ENCODE measurements at regions of chr14 and their contacts with region 1.

Region 1: GRCh38 chr14:91244501-91244901 is at the start of gene GPR68:
- DNase-seq: peak in 4 of 5 donors; percentile 40 to 69 (median 43)
- H3K4me3 ChIP-seq: peak within 1 kb of the TSS; percentile 66 to 96
- H3K4me3 Mint-ChIP-seq: peak within 1 kb of the TSS; percentile 91 to 99 (median 94)
- H3K27ac ChIP-seq: peak within 1 kb of the TSS; percentile 99
- H3K27ac Mint-ChIP-seq: peak within 1 kb of the TSS; percentile 92 to 100 (median 99)
- H3K4me1 ChIP-seq: peaks cover 94% of the 10 kb centered on the region
- H3K4me1 Mint-ChIP-seq: peaks cover 64 to 98% (median 82%) of the 10 kb centered on the region in 4 donors
- H3K27me3 ChIP-seq: no peaks in the 10 kb centered on the region
- H3K27me3 Mint-ChIP-seq: no peaks in the 10 kb centered on the region
- total RNA-seq, gene GPR68: 10.6 to 10.8 TPM

Region 2: GRCh38 chr14:90569606-90570387 is 674.7 kb before region 1 on chr14:
- CTCF ChIA-PET with region 1: no interaction called
- POLR2A ChIA-PET with region 1: no interaction called
- intact Hi-C with region 1: no loop called
- DNase-seq: no peak
- H3K4me3 ChIP-seq: no peak overlapping the region
- H3K4me3 Mint-ChIP-seq: no peak overlapping the region
- H3K27ac ChIP-seq: no peak overlapping the region
- H3K27ac Mint-ChIP-seq: no peak overlapping the region
- H3K4me1 ChIP-seq: no peaks in the 10 kb centered on the region
- H3K4me1 Mint-ChIP-seq: no peaks in the 10 kb centered on the region
- H3K27me3 ChIP-seq: no peaks in the 10 kb centered on the region
- H3K27me3 Mint-ChIP-seq: no peaks in the 10 kb centered on the region

Region 3: GRCh38 chr14:90911121-90911520 is 333.4 kb before region 1 on chr14:
- CTCF ChIA-PET with region 1: no interaction called
- POLR2A ChIA-PET with region 1: no interaction called
- intact Hi-C with region 1: no loop called
- DNase-seq: no peak
- H3K4me3 ChIP-seq: no peak overlapping the region
- H3K4me3 Mint-ChIP-seq: no peak overlapping the region
- H3K27ac ChIP-seq: no peak overlapping the region
- H3K27ac Mint-ChIP-seq: peak overlapping the region in 3 of 7 donors; percentile 1 to 36 (median 19)
- H3K4me1 ChIP-seq: no peaks in the 10 kb centered on the region
- H3K4me1 Mint-ChIP-seq: peaks cover 0 to 11% (median 9%) of the 10 kb centered on the region in 4 donors
- H3K27me3 ChIP-seq: no peaks in the 10 kb centered on the region
- H3K27me3 Mint-ChIP-seq: no peaks in the 10 kb centered on the region

Region 4: DNA sequence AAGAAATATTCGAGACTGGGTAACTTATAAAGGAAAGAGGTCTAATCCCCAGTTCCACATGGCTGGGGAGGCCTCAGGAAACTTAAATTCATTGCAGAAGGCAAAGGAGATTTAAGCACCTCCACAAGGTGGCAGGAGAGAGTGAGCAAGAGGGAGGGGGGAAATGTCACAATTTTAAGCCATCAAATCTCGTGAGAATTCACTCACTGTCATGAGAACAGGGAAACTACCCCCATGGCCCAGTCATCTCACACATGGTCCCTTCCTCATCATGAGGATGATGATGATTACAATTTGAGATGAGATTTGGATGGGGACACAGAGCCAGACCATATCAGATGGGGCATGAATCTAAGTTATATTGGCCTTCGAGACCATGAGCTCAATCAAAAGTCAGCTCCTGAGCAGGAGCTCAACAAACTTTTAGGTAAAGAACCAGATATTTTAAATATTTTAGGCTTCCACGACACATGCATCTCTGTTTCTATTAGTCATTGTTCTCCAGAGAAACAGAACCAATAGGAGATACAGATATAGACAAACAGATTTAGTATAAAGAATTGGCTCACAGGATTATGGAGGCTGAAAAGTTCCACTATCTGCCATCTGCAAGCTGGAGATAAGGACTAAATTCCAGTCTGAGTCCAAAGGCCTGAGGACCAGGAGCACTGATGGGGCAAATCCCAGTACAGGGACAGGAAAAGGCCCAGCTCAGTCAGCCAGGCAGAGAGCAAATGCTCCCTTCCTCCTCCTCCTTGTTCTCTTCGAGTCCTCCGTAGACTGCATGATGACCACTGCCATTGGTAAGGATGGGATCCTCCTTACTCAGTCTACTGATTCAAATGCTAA is 105.8 kb before region 1 on chr14:
- CTCF ChIA-PET with region 1: no interaction called
- POLR2A ChIA-PET with region 1: no interaction called
- intact Hi-C with region 1: no loop called
- DNase-seq: peak; percentile 40 to 53 (median 48)
- H3K4me3 ChIP-seq: no peak overlapping the region
- H3K4me3 Mint-ChIP-seq: no peak overlapping the region
- H3K27ac ChIP-seq: no peak overlapping the region
- H3K27ac Mint-ChIP-seq: peak overlapping the region in 4 of 7 donors; percentile 13 to 64 (median 60)
- H3K4me1 ChIP-seq: peaks cover 20% of the 10 kb centered on the region
- H3K4me1 Mint-ChIP-seq: peaks cover 23 to 45% (median 37%) of the 10 kb centered on the region in 4 donors
- H3K27me3 ChIP-seq: no peaks in the 10 kb centered on the region
- H3K27me3 Mint-ChIP-seq: no peaks in the 10 kb centered on the region

Region 5: DNA sequence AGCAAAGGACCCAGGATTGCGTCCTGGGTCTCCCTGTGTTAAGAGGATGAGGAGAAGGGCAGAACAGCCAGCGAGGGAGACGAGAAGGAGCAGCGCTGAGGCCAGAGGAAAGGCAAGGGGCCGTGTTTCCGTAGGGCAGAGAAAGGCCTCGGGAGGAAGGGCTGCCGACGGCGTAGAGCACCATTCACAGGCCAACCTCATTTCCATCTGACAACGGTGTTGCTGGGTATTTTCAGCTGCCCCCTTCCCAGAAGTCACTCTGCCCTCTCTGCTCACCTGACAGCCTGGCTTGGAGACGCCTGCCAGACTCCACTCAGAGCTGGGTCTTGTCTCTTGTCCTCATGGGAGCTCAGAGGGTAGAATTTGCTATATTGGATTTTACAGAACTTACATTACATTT is 51.4 kb before region 1 on chr14:
- CTCF ChIA-PET with region 1: interaction called, 3 read pairs
- POLR2A ChIA-PET with region 1: interaction called, 34 read pairs
- intact Hi-C with region 1: loop called (anchors 5 kb)
- DNase-seq: no peak
- H3K4me3 ChIP-seq: no peak overlapping the region
- H3K4me3 Mint-ChIP-seq: peak overlapping the region in 1 of 8 donors; percentile 55
- H3K27ac ChIP-seq: no peak overlapping the region
- H3K27ac Mint-ChIP-seq: peak overlapping the region in 4 of 7 donors; percentile 3 to 44 (median 40)
- H3K4me1 ChIP-seq: peaks cover 14% of the 10 kb centered on the region
- H3K4me1 Mint-ChIP-seq: peaks cover 18 to 31% (median 25%) of the 10 kb centered on the region in 4 donors
- H3K27me3 ChIP-seq: no peaks in the 10 kb centered on the region
- H3K27me3 Mint-ChIP-seq: no peaks in the 10 kb centered on the region

Region 6: DNA sequence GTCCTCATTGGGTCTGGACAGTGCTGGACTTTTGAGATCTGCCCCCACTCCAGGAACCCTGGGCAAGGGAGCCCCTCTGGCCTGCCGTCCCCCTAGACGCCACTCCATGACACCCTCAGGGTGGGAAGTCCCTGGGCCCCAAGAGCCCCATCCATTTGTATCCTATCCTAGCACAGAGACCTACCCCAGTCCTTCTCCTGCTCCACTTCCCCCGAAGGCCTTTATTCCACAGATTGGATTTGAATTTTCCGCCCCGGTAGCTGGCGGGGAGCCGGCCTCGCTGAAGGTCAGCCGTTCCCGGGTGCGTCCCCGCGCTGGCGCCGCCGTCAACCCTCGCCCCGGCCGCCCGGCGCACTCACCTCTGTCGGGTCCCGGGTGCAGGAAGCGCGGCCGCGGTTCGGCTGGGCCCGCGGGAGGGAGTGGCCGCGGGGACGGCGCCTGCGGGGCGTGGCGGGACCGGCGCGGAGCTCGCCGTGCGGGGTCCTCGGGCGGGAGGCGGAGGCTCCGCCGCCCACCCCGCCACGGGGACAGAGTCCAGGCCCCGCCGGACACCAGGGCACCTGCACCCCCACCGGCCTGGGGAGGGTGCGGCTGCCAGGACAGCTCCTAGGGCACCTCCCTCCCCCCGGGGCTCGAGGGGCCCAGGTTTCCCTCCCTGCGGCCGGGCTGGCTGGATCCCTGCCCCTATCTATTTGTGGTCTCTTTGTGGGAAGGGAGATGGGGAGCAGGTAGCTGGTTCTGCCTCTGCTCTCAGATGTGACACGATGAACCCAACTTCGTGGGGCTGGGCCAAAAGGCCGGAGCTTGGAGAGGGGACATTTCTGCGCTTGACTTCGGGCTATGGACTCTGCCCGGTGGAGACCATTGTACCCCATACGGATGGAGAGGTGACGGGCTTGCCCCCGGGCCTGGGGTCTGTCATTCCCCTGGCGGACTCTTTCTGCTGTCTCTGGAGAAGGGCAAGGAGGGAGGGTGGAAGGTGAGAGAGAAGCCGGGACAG is 19.9 kb after region 1 on chr14:
- CTCF ChIA-PET with region 1: interaction called, 7 read pairs
- POLR2A ChIA-PET with region 1: interaction called, 124 read pairs
- intact Hi-C with region 1: no loop called
- DNase-seq: peak in 2 of 5 donors; percentile 39 to 41
- H3K4me3 ChIP-seq: peak overlapping the region in 1 of 2 donors; percentile 32
- H3K4me3 Mint-ChIP-seq: peak overlapping the region; percentile 69 to 85 (median 79)
- H3K27ac ChIP-seq: peak overlapping the region; percentile 31
- H3K27ac Mint-ChIP-seq: peak overlapping the region in 6 of 7 donors; percentile 60 to 97 (median 84)
- H3K4me1 ChIP-seq: peaks cover 45% of the 10 kb centered on the region
- H3K4me1 Mint-ChIP-seq: peaks cover 39 to 69% (median 46%) of the 10 kb centered on the region in 4 donors
- H3K27me3 ChIP-seq: no peaks in the 10 kb centered on the region
- H3K27me3 Mint-ChIP-seq: no peaks in the 10 kb centered on the region

Region 7: DNA sequence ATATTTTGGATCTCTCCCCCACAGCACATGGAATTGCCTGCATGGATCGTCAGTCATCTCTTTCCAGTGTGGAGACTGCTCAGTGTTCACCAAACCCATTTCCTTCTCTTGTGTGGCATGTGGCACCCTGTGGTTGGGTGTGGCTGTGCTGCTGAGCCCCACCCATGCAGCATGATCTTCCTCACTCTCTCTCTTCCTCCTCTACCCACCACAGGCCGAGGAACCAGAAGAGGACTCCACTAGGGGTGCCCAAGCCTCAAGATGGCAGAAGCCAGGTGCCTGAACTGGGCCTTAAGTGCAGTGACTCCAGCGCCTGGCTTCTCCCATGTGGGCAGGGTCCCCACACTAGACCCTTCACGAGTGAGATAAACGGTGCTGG is 66.8 kb after region 1 on chr14:
- CTCF ChIA-PET with region 1: interaction called, 3 read pairs
- POLR2A ChIA-PET with region 1: interaction called, 21 read pairs
- intact Hi-C with region 1: no loop called
- DNase-seq: peak; percentile 71 to 79 (median 77)
- H3K4me3 ChIP-seq: no peak overlapping the region
- H3K4me3 Mint-ChIP-seq: peak overlapping the region in 7 of 8 donors; percentile 61 to 87 (median 79)
- H3K27ac ChIP-seq: peak overlapping the region; percentile 64
- H3K27ac Mint-ChIP-seq: peak overlapping the region; percentile 91 to 99 (median 99)
- H3K4me1 ChIP-seq: peaks cover 64% of the 10 kb centered on the region
- H3K4me1 Mint-ChIP-seq: peaks cover 40 to 82% (median 57%) of the 10 kb centered on the region in 4 donors
- H3K27me3 ChIP-seq: no peaks in the 10 kb centered on the region
- H3K27me3 Mint-ChIP-seq: no peaks in the 10 kb centered on the region

Region 8: DNA sequence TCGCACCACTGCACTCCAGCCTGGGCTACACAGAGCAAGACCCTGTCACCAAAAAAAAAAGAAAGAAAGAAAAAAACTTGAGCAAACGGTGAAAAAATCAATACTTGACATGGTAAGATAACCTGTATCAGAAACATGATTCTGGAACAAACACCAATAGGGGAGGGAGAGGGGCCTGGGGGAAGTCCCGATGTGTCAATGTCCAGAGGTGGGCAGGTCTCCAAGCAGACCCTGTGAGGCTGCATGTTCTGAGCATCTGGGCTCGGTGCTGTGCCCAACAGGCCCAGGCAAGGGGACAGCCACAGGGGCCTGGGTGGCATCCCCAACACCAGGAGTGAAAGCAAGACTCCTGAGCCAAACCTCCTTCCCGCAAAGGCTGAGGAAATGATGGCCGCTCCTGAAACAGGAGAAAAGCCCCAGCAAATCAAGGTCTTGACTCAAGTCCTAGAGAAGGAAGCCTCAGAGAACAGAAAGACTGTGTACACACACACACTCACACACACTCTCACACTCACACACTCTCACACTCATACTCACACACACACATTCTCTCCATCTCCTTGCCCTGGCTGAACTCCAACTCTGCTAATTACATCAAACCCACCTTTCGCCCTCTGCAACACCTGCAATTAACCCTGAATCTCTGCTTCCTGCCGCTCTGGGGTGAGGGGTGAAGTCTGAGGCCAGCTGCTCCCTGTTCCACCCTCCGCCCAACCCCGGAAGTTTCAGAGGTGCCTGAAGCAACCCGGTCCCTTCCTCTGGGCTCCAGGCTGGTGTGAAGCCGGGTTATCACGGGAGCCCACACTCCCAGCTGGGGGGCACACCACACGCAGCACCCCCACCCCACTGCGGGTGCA is 152.7 kb after region 1 on chr14:
- CTCF ChIA-PET with region 1: no interaction called
- POLR2A ChIA-PET with region 1: interaction called, 12 read pairs
- intact Hi-C with region 1: no loop called
- DNase-seq: peak; percentile 64 to 85 (median 72)
- H3K4me3 ChIP-seq: peak overlapping the region; percentile 49 to 61
- H3K4me3 Mint-ChIP-seq: peak overlapping the region; percentile 79 to 99 (median 82)
- H3K27ac ChIP-seq: peak overlapping the region; percentile 65
- H3K27ac Mint-ChIP-seq: peak overlapping the region; percentile 90 to 98 (median 95)
- H3K4me1 ChIP-seq: peaks cover 97% of the 10 kb centered on the region
- H3K4me1 Mint-ChIP-seq: peaks cover 70 to 98% (median 84%) of the 10 kb centered on the region in 4 donors
- H3K27me3 ChIP-seq: no peaks in the 10 kb centered on the region
- H3K27me3 Mint-ChIP-seq: no peaks in the 10 kb centered on the region

Region 9: DNA sequence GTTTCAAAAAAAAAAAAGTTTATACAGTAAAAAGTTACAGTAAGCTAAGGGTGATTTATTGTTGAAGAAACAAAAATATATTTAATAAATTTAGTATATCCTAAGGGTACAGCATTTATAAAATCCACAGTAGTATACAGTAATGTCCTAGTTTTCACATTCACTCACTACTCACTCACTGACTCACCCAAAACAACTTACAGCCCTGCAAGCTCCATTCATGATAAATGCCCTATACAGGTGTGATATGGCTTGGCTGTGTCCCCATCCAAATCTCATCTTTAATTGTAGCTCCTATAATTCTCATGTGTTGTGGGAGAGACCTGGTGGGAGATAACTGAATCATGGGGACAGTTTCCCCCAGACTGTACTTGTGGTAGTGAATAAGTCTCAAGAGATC is 561.2 kb after region 1 on chr14:
- CTCF ChIA-PET with region 1: no interaction called
- POLR2A ChIA-PET with region 1: no interaction called
- intact Hi-C with region 1: no loop called
- DNase-seq: no peak
- H3K4me3 ChIP-seq: no peak overlapping the region
- H3K4me3 Mint-ChIP-seq: no peak overlapping the region
- H3K27ac ChIP-seq: no peak overlapping the region
- H3K27ac Mint-ChIP-seq: peak overlapping the region in 3 of 7 donors; percentile 2 to 66 (median 50)
- H3K4me1 ChIP-seq: peaks cover 4% of the 10 kb centered on the region
- H3K4me1 Mint-ChIP-seq: peaks cover 15 to 32% (median 24%) of the 10 kb centered on the region in 4 donors
- H3K27me3 ChIP-seq: no peaks in the 10 kb centered on the region
- H3K27me3 Mint-ChIP-seq: no peaks in the 10 kb centered on the region